MCF 10A (cell line): ENCODE measurements at regions of chr2 and their contacts with region 1.

Region 1: DNA sequence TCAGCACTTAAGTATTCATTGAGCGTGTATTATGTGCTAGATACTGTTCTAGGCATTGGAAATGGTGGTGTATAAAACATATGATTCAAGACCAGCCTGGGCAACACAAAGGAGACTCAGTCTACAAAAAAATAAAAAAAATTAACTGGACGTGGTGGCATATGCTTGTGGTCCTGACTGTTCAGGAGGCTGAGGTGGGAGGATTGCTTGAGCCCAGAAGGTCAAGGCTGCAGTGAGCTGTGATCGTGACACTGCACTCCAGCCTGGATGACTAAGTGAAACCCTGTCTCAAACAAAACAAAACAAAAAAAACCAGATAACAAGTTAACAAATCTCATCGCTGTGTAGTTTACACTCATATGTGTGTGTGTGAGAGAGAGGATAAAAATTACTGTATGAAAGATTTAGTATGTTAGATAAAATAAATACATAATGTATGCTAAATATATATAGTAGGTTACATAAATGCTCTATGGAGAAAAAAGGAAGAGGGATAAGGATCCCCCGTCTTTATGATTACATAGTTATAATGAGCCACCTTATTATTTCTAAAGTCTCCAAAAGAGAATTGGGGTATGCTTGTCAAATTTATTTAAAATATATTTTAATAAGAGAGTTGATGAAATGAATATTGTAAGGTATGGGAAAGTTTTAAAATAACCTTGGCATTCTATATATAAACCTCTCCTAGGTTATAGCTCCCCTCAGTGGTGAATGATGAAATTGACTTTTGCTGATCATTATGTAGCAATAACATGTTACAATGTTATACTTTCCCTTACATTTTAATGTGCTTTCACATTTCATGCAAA is 69.2 kb downstream of the EHBP1 start:
- DNase-seq: peak; percentile 62
- H3K4me3 Mint-ChIP-seq: no peak overlapping the region
- H3K27ac Mint-ChIP-seq: peak overlapping the region; percentile 51
- H3K4me1 Mint-ChIP-seq: peaks cover 4% of the 10 kb centered on the region
- H3K27me3 Mint-ChIP-seq: no peaks in the 10 kb centered on the region
- CTCF ChIP-seq: peak; percentile 76

Region 2: DNA sequence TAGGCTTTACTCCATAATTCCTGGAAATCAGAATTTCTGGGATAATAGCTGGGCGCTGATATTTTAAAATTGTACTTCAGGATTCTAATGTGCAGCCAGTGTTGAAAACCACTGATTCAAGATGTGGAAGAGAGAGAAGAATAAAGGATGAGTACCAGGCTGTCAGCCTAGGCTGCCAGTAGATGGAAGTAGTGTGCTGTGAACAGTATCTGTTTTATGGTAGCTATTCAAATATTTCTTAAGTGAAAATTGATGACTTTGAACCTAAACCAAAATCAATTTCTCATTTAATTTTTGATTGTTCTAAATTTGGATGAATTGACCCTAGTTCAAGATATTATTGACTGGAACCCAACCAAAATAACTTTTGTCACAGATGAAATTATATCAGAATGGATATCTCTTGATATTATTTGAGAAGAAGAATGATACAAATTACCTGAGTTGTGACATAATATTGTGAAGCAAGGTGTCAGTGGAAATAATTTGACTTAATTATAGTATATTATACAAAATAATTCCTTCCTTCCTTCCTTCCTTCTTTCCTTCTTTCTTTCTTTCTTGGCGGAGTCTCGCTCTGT is 781.2 kb before region 1 on chr2:
- CTCF ChIA-PET with region 1: interaction called, 3 read pairs
- POLR2A ChIA-PET with region 1: no interaction called
- intact Hi-C with region 1: loop called (anchors 5 kb)
- DNase-seq: peak; percentile 54
- H3K4me3 Mint-ChIP-seq: no peak overlapping the region
- H3K27ac Mint-ChIP-seq: no peak overlapping the region
- H3K4me1 Mint-ChIP-seq: no peaks in the 10 kb centered on the region
- H3K27me3 Mint-ChIP-seq: no peaks in the 10 kb centered on the region
- CTCF ChIP-seq: peak; percentile 67

Region 3: GRCh38 chr2:62464221-62465007 is 310.3 kb before region 1 on chr2:
- CTCF ChIA-PET with region 1: interaction called, 266 read pairs
- POLR2A ChIA-PET with region 1: interaction called, 3 read pairs
- intact Hi-C with region 1: no loop called
- DNase-seq: no peak
- H3K4me3 Mint-ChIP-seq: no peak overlapping the region
- H3K27ac Mint-ChIP-seq: peak overlapping the region; percentile 17
- H3K4me1 Mint-ChIP-seq: peaks cover 8% of the 10 kb centered on the region
- H3K27me3 Mint-ChIP-seq: no peaks in the 10 kb centered on the region
- CTCF ChIP-seq: no peak

Region 4: DNA sequence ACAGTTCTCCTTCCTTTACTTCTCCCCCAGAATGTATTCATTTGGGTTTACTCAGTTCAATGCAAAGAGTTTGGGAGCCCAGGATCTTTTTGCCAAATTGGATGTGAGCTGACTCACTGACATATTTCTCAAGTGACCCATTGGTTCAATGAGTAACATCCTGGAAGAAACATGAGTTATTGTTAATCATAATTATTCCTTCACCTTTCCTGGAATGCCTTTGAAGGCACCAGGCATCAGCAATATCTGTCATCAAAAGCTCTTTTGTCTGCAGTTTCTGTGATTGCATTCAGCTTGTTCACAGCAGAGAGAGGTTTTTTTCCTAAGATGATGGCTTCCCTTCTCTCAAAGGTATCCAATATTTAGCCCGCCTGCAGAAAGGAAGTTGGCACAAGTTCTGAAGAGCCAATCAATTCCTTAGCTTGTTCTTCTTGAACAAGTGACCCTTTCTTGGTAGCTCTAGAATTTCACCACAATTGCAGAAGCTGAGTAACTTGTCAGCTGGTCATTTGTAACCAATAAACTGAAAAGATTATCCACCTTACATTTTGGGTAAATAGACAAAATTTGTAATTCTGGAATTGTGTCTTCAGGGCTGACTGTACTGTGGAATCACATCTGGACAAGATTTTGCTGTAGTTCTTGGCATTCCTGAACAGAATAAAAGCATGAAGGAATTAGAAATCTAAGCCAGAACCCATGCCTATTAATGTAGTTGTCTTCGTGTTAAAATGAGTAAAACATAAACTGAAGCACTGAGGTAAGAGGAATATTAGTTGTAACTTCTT is 196.6 kb before region 1 on chr2:
- CTCF ChIA-PET with region 1: no interaction called
- POLR2A ChIA-PET with region 1: no interaction called
- intact Hi-C with region 1: loop called (anchors 2 kb)
- DNase-seq: peak; percentile 94
- H3K4me3 Mint-ChIP-seq: peak overlapping the region; percentile 10
- H3K27ac Mint-ChIP-seq: peak overlapping the region; percentile 90
- H3K4me1 Mint-ChIP-seq: peaks cover 19% of the 10 kb centered on the region
- H3K27me3 Mint-ChIP-seq: no peaks in the 10 kb centered on the region
- CTCF ChIP-seq: no peak

Region 5: DNA sequence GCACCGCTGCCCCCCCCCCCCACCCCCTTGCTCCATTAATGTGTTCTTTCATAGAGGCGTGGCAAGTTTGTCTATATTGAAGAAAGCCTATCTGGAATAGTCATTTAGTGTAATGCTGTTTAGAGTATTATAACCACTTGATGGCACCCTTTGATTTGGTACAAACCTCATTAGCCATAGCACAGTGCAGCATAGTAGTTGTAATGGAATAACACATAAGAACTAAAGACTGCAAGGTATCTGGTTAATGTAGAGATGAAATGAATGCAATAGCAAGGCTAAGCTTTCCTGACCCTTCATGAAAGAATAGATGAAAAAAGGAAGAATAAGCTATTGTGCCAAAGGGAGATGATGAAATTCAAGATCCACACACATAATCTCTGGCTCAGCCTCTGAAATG is 12.6 kb after region 1 on chr2:
- CTCF ChIA-PET with region 1: interaction called, 15 read pairs
- POLR2A ChIA-PET with region 1: interaction called, 3 read pairs
- intact Hi-C with region 1: no loop called
- DNase-seq: peak; percentile 55
- H3K4me3 Mint-ChIP-seq: no peak overlapping the region
- H3K27ac Mint-ChIP-seq: no peak overlapping the region
- H3K4me1 Mint-ChIP-seq: peaks cover 39% of the 10 kb centered on the region
- H3K27me3 Mint-ChIP-seq: no peaks in the 10 kb centered on the region
- CTCF ChIP-seq: peak; percentile 45